ENCODE measurements at regions of chr3 and their contacts with region 1.

Region 1: GRCh38 chr3:183766745-183767606 is 58.4 kb downstream of the MAP6D1 start:
- DNase-seq: peak; percentile 64 to 78
- H3K4me3 ChIP-seq: no peak overlapping the region
- H3K27ac ChIP-seq: no peak overlapping the region
- H3K4me1 ChIP-seq: peaks cover 17% of the 10 kb centered on the region
- H3K27me3 ChIP-seq: no peaks in the 10 kb centered on the region
- CTCF ChIP-seq: peak; percentile 95

Region 2: DNA sequence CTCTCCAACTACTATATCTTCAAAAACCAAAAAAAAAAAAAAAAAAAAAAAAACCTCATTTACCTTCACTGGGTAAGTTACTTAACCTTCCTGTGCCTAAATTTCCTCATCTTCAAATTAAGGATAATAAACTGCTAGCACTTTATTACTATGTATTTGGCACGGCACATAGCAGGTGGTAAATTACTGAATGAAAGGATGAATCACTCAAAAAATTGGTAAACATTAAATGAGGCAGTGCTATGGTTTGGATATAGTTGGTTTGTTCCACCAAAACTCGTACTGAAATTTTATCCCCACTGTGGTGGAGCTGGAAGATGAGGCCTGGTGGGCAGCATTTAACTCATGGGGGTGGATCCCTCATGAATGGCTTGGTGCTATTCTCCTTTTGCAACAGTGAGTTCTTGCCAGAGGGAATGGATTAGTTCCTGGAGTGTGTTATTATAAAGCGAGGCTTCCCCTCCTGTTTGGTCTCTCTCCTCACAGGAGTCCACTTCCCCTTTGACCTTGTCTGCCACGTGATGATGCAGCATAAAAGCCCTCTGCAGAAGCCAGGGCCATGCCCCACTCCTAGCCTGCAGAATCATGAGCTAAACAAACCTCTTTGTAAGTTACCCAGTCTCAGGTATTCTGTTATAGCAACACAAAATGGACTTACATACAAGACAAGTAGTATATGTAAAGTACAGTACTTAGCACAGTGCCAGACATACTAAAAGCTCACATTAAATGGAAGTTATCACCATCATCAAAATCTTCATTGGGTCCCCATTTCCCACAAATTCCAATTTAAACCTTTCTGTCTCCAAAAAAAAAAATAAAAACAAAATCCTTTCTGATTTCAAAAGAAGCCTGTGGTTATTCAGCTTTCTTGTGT is 807.3 kb before region 1 on chr3:
- CTCF ChIA-PET with region 1: no interaction called
- POLR2A ChIA-PET with region 1: interaction called, 11 read pairs
- intact Hi-C with region 1: no loop called
- DNase-seq: no peak
- H3K4me3 ChIP-seq: no peak overlapping the region
- H3K27ac ChIP-seq: no peak overlapping the region
- H3K4me1 ChIP-seq: no peaks in the 10 kb centered on the region
- H3K27me3 ChIP-seq: no peaks in the 10 kb centered on the region
- CTCF ChIP-seq: no peak

Region 3: DNA sequence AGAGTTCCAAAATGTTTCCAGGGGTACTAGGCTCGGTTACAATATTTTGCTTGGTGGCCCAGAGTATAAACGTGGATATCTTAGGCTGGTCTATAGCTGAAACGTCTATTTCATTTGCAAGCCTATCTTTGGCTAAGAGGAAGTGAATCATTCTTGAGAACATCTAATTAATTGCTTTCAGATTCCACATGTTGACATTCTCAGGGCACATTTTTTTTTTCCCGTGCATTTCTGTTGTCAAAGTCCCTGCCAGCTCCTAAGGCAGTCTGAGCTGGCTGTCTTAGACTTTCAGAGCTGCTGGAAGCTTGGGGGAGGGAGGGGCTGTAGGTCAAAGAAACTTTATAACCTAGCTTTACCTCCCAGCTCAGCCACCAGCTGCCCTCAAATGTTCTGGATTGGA is 581.3 kb before region 1 on chr3:
- CTCF ChIA-PET with region 1: no interaction called
- POLR2A ChIA-PET with region 1: no interaction called
- intact Hi-C with region 1: loop called (anchors 2 kb)
- DNase-seq: peak in 1 of 2 experiments; percentile 85
- H3K4me3 ChIP-seq: no peak overlapping the region
- H3K27ac ChIP-seq: peak overlapping the region; percentile 27
- H3K4me1 ChIP-seq: peaks cover 16% of the 10 kb centered on the region
- H3K27me3 ChIP-seq: no peaks in the 10 kb centered on the region
- CTCF ChIP-seq: no peak

Region 4: DNA sequence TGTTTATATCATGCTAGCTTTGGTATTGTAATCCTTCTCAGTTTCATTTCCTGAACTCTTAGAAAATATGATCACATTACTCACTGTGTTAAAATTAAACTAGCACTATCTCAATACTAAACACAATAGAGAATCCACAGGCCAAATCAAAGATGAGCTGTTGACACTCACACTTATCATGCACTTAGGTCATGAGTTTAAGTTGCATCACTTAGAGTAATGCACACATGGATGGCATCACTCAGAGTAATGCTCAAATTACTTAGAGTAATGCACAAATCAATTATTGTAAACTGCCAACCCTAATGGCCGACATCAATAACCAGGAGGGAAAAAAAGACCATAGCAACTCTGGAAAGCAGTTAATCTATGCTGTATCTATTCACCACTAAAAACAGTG is 298.6 kb before region 1 on chr3:
- CTCF ChIA-PET with region 1: interaction called, 8 read pairs
- POLR2A ChIA-PET with region 1: no interaction called
- intact Hi-C with region 1: loop called (anchors 1 kb)
- DNase-seq: no peak
- H3K4me3 ChIP-seq: no peak overlapping the region; the same call in 1 of the 2 replicates
- H3K27ac ChIP-seq: no peak overlapping the region
- H3K4me1 ChIP-seq: peaks cover 3% of the 10 kb centered on the region; the same call in 1 of the 2 replicates
- H3K27me3 ChIP-seq: no peaks in the 10 kb centered on the region
- CTCF ChIP-seq: no peak

Region 5: GRCh38 chr3:183502237-183503181 is 264.5 kb before region 1 on chr3:
- CTCF ChIA-PET with region 1: no interaction called
- POLR2A ChIA-PET with region 1: no interaction called
- intact Hi-C with region 1: loop called (anchors 1 kb)
- DNase-seq: no peak
- H3K4me3 ChIP-seq: no peak overlapping the region
- H3K27ac ChIP-seq: no peak overlapping the region
- H3K4me1 ChIP-seq: no peaks in the 10 kb centered on the region
- H3K27me3 ChIP-seq: no peaks in the 10 kb centered on the region
- CTCF ChIP-seq: no peak

Region 6: GRCh38 chr3:183635431-183636220 is 131.3 kb before region 1 on chr3 and contains the start of gene KLHL24:
- CTCF ChIA-PET with region 1: no interaction called
- POLR2A ChIA-PET with region 1: no interaction called
- intact Hi-C with region 1: loop called (anchors 1 kb)
- DNase-seq: peak; percentile 91 to 96
- H3K4me3 ChIP-seq: peak within 1 kb of the TSS; percentile 85
- H3K27ac ChIP-seq: peak within 1 kb of the TSS; percentile 50
- H3K4me1 ChIP-seq: peaks cover 9% of the 10 kb centered on the region
- H3K27me3 ChIP-seq: no peaks in the 10 kb centered on the region
- CTCF ChIP-seq: peak; percentile 44; the same call in 1 of the 2 replicates
- total RNA-seq, gene KLHL24: 59.1 and 73.0 TPM in 2 replicates

Region 7: DNA sequence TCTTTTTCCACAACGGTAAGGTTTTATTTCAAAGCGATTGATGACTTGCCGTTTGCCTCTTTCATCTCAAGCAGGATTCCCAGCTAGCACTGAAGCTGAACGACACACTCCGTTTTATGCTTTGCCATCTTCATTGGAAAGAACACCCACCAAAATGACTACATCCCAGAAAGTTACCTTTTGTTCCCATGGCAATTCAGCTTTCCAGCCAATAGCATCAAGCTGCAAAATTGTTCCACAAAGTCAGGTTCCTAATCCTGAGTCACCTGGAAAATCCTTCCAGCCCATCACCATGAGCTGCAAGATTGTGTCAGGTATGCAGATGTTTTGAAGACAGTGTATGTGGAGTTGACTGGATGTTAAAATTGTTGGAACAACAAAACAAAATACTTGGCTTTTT is 12.9 kb before region 1 on chr3:
- CTCF ChIA-PET with region 1: interaction called, 12 read pairs
- POLR2A ChIA-PET with region 1: interaction called, 3 read pairs
- intact Hi-C with region 1: no loop called
- DNase-seq: no peak
- H3K4me3 ChIP-seq: no peak overlapping the region
- H3K27ac ChIP-seq: no peak overlapping the region
- H3K4me1 ChIP-seq: no peaks in the 10 kb centered on the region
- H3K27me3 ChIP-seq: no peaks in the 10 kb centered on the region
- CTCF ChIP-seq: no peak

Region 8: GRCh38 chr3:184017672-184018423 is 250.9 kb after region 1 on chr3 and contains the start of gene ABCC5:
- CTCF ChIA-PET with region 1: no interaction called
- POLR2A ChIA-PET with region 1: no interaction called
- intact Hi-C with region 1: no loop called
- DNase-seq: peak; percentile 87 to 94
- H3K4me3 ChIP-seq: peak within 1 kb of the TSS; percentile 99
- H3K27ac ChIP-seq: peak within 1 kb of the TSS; percentile 58
- H3K4me1 ChIP-seq: peaks cover 34% of the 10 kb centered on the region
- H3K27me3 ChIP-seq: no peaks in the 10 kb centered on the region
- CTCF ChIP-seq: peak; percentile 83
- total RNA-seq, gene ABCC5: 133 and 151 TPM in 2 replicates

Measured in PC-9 (cell line).